Adrenal gland (tissue), 19 donors: ENCODE measurements at regions of chr6 and their contacts with region 1.

Region 1: DNA sequence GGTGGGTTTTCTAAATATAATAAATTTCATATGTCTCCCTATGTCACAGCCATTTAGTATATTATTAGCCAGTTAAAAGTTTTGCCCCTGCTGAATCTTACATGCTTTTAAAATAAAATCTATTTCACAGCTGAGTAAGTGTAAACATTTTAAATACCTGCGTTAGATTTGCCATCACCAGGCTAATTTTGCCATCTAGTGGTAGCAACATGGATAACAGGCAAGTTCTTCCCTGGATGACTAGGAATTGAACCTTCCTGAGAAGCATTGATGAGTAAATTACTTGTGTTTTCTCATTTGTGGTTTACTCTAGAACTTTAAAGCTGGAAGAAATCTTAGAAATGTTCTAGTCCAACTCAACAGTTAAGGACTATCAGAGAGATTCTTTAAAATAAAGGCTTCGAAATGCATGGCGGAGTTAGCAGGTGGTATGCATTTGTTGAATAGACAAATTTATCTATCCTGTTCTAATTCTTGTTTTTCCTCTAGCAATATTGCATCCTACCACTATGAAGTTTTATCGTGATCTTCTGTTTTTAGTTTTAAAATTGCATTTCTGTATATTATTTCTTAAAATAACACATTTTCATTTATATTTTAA is 2.6 kb downstream of the PRSS35 start:
- DNase-seq: peak in 5 of 7 donors; percentile 24 to 61 (median 56)
- H3K4me3 ChIP-seq: no peak overlapping the region
- H3K27ac ChIP-seq: no peak overlapping the region
- H3K4me1 ChIP-seq: peaks cover 10 to 14% of the 10 kb centered on the region in 2 donors
- H3K27me3 ChIP-seq: no peaks in the 10 kb centered on the region
- CTCF ChIP-seq: peak; percentile 71 to 90 (median 86)
- POLR2A ChIP-seq: no peak

Region 2: GRCh38 chr6:83067448-83068413 is 447.2 kb before region 1 on chr6 and contains the start of gene DOP1A:
- intact Hi-C with region 1: loop called in 1 of 2 experiments (anchors 10 kb)
- DNase-seq: peak; percentile 95 to 98 (median 97)
- H3K4me3 ChIP-seq: peak within 1 kb of the TSS; percentile 36 to 96 (median 64)
- H3K27ac ChIP-seq: peak within 1 kb of the TSS; percentile 23 to 91 (median 88)
- H3K4me1 ChIP-seq: peaks cover 3 to 41% of the 10 kb centered on the region in 2 donors
- H3K27me3 ChIP-seq: no peaks in the 10 kb centered on the region
- CTCF ChIP-seq: peak; percentile 90 to 99 (median 96)
- POLR2A ChIP-seq: peak; percentile 19 to 77
- total RNA-seq, gene DOP1A: 12.2 to 33.6 (median 21.2) TPM

Region 3: DNA sequence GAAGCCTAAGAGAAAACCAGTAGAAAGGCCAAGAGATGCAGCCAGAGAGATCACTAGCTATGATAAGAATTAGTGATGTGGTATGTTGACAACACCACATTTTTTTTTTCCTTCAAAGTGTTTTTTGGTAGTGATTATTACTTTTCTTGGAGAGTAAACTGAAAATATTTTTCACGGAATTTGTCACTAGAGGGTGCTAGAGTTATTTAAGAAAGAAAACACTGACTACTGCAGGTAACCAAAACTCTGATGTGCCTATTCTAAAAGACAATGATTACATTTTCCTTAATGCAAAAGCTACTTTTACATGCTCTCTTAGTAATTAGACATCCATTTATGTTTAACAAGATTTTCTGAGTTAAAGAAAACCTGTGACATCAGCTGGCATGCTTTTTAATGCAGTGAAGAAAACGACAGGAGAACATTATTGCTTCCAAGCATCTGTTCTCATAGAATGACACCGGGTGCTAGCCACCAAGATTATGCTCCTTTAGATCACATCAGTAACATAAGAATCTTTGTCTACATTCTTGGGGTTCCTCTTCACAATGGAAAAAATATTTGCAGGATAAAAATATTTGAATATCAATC is 293.0 kb before region 1 on chr6:
- intact Hi-C with region 1: loop called (anchors 5 kb)
- DNase-seq: no peak
- H3K4me3 ChIP-seq: no peak overlapping the region
- H3K27ac ChIP-seq: no peak overlapping the region
- H3K4me1 ChIP-seq: peaks cover 0 to 7% of the 10 kb centered on the region in 2 donors
- H3K27me3 ChIP-seq: no peaks in the 10 kb centered on the region
- CTCF ChIP-seq: peak; percentile 16 to 66 (median 49)
- POLR2A ChIP-seq: no peak

Region 4: GRCh38 chr6:83303426-83303825 is 211.5 kb before region 1 on chr6:
- intact Hi-C with region 1: loop called in 1 of 2 experiments (anchors 5 kb)
- DNase-seq: no peak
- H3K4me3 ChIP-seq: no peak overlapping the region
- H3K27ac ChIP-seq: no peak overlapping the region
- H3K4me1 ChIP-seq: no peaks in the 10 kb centered on the region
- H3K27me3 ChIP-seq: no peaks in the 10 kb centered on the region
- CTCF ChIP-seq: no peak
- POLR2A ChIP-seq: no peak

Region 5: DNA sequence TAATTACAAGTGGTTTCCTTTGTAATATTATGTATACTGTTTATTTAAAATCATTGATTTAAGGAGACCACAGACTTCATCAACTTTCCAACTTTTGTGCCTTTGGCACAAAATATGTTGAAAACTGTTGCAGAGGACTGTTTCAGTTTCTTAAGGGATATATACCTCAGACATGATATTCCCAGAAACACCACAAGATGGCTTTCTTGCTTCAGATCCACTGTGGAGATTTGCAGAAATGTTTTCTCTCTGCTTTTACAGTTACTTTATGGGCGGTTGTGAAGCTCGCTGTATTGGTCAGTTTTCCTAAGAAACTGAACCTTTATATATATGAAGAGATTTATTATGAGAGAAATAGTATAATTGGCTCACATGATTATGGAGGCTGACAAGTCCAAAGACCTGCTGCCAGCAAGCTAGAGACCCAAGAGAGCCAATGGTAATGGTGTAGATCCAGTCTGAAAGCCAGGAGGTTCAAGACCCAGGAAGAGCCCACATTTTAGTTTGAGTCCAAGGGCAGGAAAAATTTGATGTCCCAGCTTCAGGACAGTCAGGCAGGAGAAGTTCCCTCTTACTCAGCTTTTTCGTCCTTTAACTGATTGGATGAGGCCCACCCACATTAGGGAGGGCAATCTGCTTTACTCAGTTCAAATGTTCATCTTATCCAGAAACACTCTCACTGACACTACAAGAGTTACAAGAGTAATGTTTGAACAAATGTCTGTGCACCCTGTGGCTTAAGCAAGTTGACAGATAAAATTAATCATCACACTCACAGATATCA is 96.9 kb before region 1 on chr6:
- intact Hi-C with region 1: loop called (anchors 5 kb)
- DNase-seq: peak in 1 of 7 donors; percentile 30
- H3K4me3 ChIP-seq: no peak overlapping the region
- H3K27ac ChIP-seq: peak overlapping the region in 1 of 5 donors; percentile 16
- H3K4me1 ChIP-seq: peaks cover 6 to 19% of the 10 kb centered on the region in 2 donors
- H3K27me3 ChIP-seq: no peaks in the 10 kb centered on the region
- CTCF ChIP-seq: peak; percentile 47 to 85 (median 76)
- POLR2A ChIP-seq: no peak

Region 6: DNA sequence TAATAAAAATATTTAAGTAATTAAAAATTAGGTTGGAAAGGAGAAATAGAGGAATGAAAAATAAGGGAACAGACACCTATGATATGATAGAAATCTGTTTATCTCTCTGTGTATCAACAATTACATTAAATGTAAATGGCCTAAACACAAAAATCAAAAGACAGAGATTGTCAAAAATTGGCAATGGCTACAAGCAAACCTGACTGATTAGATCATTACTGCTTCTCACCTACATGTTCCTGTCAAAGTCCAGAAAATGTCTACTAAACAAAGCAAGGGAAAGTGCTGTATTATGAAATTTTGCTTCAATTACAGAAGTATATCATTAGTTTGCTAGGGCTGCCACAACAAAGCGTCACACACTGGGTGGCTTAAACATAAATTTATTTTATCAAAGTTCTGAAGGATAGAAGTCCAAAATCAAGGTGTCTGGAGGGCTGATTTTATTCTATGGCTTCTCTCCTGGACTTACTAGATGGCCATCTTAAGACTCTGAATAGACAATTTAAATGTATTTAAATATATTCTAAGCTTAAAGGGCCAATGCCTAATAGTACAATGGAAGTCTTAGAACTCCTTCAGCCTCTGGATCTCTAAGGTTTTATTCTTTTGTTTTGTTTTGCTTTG is 90.5 kb before region 1 on chr6:
- intact Hi-C with region 1: loop called (anchors 5 kb)
- DNase-seq: no peak
- H3K4me3 ChIP-seq: no peak overlapping the region
- H3K27ac ChIP-seq: no peak overlapping the region
- H3K4me1 ChIP-seq: peaks cover 10 to 38% of the 10 kb centered on the region in 2 donors
- H3K27me3 ChIP-seq: no peaks in the 10 kb centered on the region
- CTCF ChIP-seq: no peak
- POLR2A ChIP-seq: no peak